Testis (tissue), 5 donors: ENCODE measurements at regions of chr3 and their contacts with region 1.

Region 1: GRCh38 chr3:160003520-160004128 is 15.0 kb downstream of the IL12A start:
- DNase-seq: peak; percentile 68
- H3K4me3 ChIP-seq: no peak overlapping the region
- H3K27ac ChIP-seq: no peak overlapping the region
- H3K4me1 ChIP-seq: no peaks in the 10 kb centered on the region
- H3K27me3 ChIP-seq: no peaks in the 10 kb centered on the region
- CTCF ChIP-seq: peak in 1 of 3 experiments; percentile 25
- POLR2A ChIP-seq: no peak

Region 2: GRCh38 chr3:159828542-159828943 is 175.1 kb before region 1 on chr3:
- intact Hi-C with region 1: loop called (anchors 10 kb)
- DNase-seq: no peak
- H3K4me3 ChIP-seq: no peak overlapping the region
- H3K27ac ChIP-seq: no peak overlapping the region
- H3K4me1 ChIP-seq: no peaks in the 10 kb centered on the region
- H3K27me3 ChIP-seq: no peaks in the 10 kb centered on the region
- CTCF ChIP-seq: peak; percentile 7 to 57 (median 14)
- POLR2A ChIP-seq: no peak

Region 3: GRCh38 chr3:159884661-159885402 is 118.8 kb before region 1 on chr3:
- intact Hi-C with region 1: loop called (anchors 10 kb)
- DNase-seq: no peak
- H3K4me3 ChIP-seq: no peak overlapping the region
- H3K27ac ChIP-seq: no peak overlapping the region
- H3K4me1 ChIP-seq: no peaks in the 10 kb centered on the region
- H3K27me3 ChIP-seq: no peaks in the 10 kb centered on the region
- CTCF ChIP-seq: peak in 2 of 3 experiments; percentile 22 to 50
- POLR2A ChIP-seq: no peak

Region 4: GRCh38 chr3:160163229-160163878 is 159.7 kb after region 1 on chr3:
- intact Hi-C with region 1: no loop called
- DNase-seq: no peak
- H3K4me3 ChIP-seq: no peak overlapping the region
- H3K27ac ChIP-seq: no peak overlapping the region
- H3K4me1 ChIP-seq: no peaks in the 10 kb centered on the region
- H3K27me3 ChIP-seq: no peaks in the 10 kb centered on the region
- CTCF ChIP-seq: peak in 1 of 3 experiments; percentile 26
- POLR2A ChIP-seq: no peak